ENCODE measurements at regions of chr6 and their contacts with region 1.

Region 1: GRCh38 chr6:7550433-7550801 is 8.9 kb downstream of the DSP start:
- DNase-seq: peak; percentile 79
- H3K4me3 ChIP-seq: peak overlapping the region in 1 of 3 experiments; percentile 5
- H3K27ac ChIP-seq: peak overlapping the region; percentile 78
- H3K4me1 ChIP-seq: peaks cover 78% of the 10 kb centered on the region
- H3K27me3 ChIP-seq: no peaks in the 10 kb centered on the region
- CTCF ChIP-seq: no peak

Region 2: DNA sequence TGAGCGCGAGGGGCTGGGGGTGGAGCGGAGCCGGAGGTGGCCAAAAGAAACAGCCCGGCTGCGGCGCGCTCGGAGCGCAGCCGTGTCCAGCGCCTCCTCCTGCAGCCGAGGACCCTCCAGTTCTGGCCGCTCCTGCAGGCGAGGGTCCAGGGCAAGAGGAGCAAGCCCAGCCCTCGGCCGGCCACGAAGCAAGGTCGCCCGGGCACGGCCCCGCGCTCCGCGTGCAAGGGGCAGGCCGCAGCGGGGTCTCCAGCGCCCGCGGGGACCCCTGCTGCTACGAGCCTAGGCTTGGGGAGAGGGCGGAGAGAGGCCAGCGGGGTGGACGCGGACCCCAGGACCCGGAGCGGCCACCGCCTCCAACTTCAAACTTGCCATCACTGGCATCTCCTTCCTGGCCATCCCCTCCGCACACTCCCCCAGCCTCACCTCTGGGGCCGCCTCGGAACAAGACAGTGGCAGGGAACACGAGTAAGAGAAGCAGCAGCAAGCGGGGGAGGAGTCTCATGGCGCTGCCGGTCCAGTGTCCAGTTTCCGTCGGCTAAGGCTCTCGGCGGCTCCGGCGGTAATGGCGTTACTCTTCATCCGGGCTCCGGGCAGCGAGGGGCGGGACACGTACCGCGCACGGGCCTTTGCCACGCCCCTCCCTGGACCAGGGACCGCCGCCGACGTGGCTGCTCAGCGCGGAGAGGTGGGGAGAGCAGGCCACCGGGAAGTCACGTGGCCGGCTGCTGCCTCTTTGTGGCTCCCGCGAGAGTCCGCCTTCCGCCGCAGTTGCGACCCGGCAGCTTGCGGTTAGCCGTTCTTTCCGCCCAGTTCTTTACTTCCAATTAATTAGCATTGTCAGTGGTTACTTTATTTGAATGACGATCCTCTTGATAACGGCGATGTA is 237.6 kb before region 1 on chr6 and contains the start of gene SSR1:
- CTCF ChIA-PET with region 1: no interaction called
- dilution Hi-C with region 1: no loop called
- in situ Hi-C with region 1: no loop called
- intact Hi-C with region 1: loop called (anchors 5 kb)
- DNase-seq: peak; percentile 96
- H3K4me3 ChIP-seq: peak within 1 kb of the TSS; percentile 74 to 97 (median 89)
- H3K27ac ChIP-seq: peak within 1 kb of the TSS; percentile 85
- H3K4me1 ChIP-seq: peaks cover 12% of the 10 kb centered on the region
- H3K27me3 ChIP-seq: no peaks in the 10 kb centered on the region
- CTCF ChIP-seq: no peak
- total RNA-seq, gene SSR1: 93.5 to 179 TPM

Region 3: DNA sequence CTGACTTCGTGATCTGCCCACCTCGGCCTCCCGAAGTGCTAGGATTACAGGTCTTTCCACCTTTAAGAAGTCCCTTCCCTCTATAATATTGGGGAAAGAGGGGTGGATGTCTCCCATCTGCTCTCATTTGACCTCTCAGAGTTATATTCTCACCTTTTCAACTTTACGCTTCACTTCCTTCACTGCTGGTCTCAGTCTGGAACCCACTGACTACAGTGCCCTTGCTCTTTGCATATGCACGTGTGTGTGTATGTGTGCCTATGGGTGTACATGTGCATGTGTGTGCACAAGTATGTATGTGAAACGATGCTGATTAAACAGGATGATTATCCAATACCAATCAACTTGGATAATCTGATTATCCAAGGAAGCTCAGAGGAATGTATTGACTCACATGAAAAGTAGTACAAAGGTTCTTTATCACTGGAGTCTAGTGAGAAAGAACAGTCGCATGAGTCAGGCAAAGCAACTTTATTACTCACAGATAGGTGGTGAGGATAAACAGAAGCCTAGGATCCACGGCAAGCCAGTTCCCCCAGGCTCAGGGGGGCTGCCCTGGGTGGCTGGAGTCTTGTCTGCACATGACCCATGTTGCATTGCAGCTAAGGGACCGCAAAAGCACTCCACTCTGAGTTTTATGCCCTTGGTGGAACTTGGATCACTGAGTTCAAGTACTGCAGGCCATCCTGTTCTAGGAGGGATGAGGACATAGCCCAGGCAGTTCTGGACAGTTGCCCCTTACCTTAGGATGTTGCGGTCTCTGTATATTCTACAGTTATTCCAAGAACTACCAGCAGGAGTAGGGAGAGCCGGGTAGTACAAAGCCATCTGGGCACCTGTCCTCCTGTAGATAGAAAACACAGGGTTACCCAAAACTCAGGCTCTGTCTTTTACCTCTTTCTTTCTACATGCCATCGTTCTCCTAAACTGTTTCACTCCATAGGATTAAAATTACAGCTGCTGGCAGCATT is 90.5 kb after region 1 on chr6:
- CTCF ChIA-PET with region 1: no interaction called
- dilution Hi-C with region 1: no loop called
- in situ Hi-C with region 1: no loop called
- intact Hi-C with region 1: no loop called
- DNase-seq: peak; percentile 94
- H3K4me3 ChIP-seq: no peak overlapping the region
- H3K27ac ChIP-seq: peak overlapping the region; percentile 52
- H3K4me1 ChIP-seq: peaks cover 37% of the 10 kb centered on the region
- H3K27me3 ChIP-seq: no peaks in the 10 kb centered on the region
- CTCF ChIP-seq: peak; percentile 20 to 23

Region 4: DNA sequence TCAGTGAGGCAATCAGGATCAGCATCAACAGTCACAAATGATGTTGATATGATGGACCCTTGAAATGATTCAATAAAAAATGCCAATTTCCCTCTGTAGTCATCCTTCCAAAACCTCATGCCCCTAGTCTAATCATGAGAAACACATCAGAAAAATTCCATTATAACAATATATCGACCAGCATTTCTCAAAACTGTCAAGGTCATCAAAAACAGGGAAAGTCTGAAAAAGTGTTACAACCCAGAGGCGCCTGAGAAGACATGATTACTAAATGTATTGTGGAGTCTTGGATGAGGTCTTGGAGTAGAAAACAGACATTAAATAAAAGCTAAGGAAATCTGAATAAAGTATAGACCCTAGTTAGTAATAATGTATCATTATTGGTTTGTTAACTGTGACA is 751.1 kb after region 1 on chr6:
- CTCF ChIA-PET with region 1: no interaction called
- dilution Hi-C with region 1: no loop called
- in situ Hi-C with region 1: no loop called
- intact Hi-C with region 1: no loop called
- DNase-seq: no peak
- H3K4me3 ChIP-seq: no peak overlapping the region
- H3K27ac ChIP-seq: no peak overlapping the region
- H3K4me1 ChIP-seq: no peaks in the 10 kb centered on the region
- H3K27me3 ChIP-seq: peaks cover 2% of the 10 kb centered on the region
- CTCF ChIP-seq: no peak

Measured in mammary epithelial cell (primary cell).